MCF 10A (cell line): ENCODE measurements at regions of chr14 and their contacts with region 1.

Region 1: DNA sequence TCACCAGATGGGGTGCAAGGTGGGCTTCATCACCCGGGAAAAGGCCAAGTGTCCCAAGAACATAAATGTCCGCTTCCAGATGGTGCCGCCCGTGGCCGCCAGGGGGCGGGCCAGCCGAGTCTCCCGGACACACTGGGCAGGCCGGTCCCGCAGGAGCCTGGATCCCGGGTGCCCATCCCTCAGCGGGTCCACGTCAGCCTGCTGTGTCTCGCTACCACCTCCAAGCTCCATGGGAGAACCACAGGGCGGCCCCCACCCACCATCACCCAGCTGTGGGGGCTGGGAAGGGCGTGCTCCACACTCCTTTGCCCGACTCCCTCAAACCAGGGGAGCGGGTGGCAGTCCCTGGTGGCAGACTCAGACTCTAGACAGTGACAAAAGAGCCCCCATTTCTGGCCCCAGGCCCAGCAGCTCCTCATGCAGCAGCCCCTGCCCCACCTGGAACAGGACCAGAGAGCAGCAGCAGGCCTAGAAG is 22.0 kb upstream of the NUDT14 start:
- DNase-seq: peak; percentile 63
- H3K4me3 Mint-ChIP-seq: no peak overlapping the region
- H3K27ac Mint-ChIP-seq: no peak overlapping the region
- H3K4me1 Mint-ChIP-seq: peaks cover 16% of the 10 kb centered on the region
- H3K27me3 Mint-ChIP-seq: peaks cover 29% of the 10 kb centered on the region
- CTCF ChIP-seq: peak; percentile 89

Region 2: GRCh38 chr14:105213361-105213760 is 10.3 kb after region 1 on chr14:
- CTCF ChIA-PET with region 1: interaction called, 11 read pairs
- POLR2A ChIA-PET with region 1: no interaction called
- intact Hi-C with region 1: no loop called
- DNase-seq: no peak
- H3K4me3 Mint-ChIP-seq: no peak overlapping the region
- H3K27ac Mint-ChIP-seq: no peak overlapping the region
- H3K4me1 Mint-ChIP-seq: no peaks in the 10 kb centered on the region
- H3K27me3 Mint-ChIP-seq: no peaks in the 10 kb centered on the region
- CTCF ChIP-seq: no peak